ENCODE measurements at regions of chr6 and their contacts with region 1.

Region 1: GRCh38 chr6:11434565-11435326 is 102.8 kb upstream of the TMEM170B start:
- DNase-seq: peak in 1 of 2 donors; percentile 91
- H3K4me3 ChIP-seq: no peak overlapping the region
- H3K27ac ChIP-seq: peak overlapping the region; percentile 83 to 92
- H3K4me1 ChIP-seq: peaks cover 12 to 58% of the 10 kb centered on the region in 2 donors
- H3K27me3 ChIP-seq: no peaks in the 10 kb centered on the region
- CTCF ChIP-seq: no peak

Region 2: DNA sequence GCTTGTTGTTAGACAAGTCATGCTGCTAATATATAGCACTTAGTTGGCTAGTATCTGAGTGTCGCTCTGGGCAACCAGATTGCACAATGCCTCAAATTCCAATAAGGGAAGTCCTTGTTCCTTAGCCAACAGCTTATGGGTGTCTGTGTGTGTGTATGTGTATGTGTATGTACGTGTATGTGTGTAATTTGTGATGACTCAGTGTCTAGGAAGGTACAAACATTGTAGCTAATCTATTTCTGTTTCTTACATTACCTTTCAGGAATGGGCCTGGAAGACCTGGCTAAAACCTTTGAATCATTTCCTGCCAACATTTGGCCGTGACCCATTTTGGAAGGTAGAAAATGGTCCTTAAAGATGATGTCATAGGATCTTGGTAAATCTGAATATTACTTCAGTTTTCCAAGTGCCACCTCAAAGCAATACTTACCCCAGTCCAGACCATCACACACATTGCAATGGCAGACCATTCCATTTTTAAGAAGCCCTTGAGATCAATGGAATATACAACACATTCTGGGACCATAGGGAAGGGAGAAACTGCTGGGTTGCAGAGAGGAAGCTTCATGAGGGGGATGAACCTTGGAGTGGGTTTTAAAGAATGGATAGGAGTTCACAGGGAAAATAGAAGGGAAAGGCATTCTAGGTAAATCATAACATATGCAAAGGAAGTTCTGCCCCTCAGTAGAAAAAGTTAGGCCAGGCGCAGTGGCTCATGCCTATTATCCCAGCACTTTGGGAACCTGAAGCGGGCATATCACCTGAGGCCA is 227.4 kb before region 1 on chr6:
- intact Hi-C with region 1: loop called (anchors 2 kb)
- DNase-seq: peak; percentile 67 to 94
- H3K4me3 ChIP-seq: peak overlapping the region; percentile 11 to 25
- H3K27ac ChIP-seq: peak overlapping the region; percentile 91 to 94
- H3K4me1 ChIP-seq: peaks cover 43 to 89% of the 10 kb centered on the region in 2 donors
- H3K27me3 ChIP-seq: no peaks in the 10 kb centered on the region
- CTCF ChIP-seq: no peak

Region 3: GRCh38 chr6:11473008-11473740 is 38.4 kb after region 1 on chr6:
- intact Hi-C with region 1: loop called (anchors 2 kb)
- DNase-seq: peak in 1 of 2 donors; percentile 70
- H3K4me3 ChIP-seq: peak overlapping the region; percentile 23 to 26
- H3K27ac ChIP-seq: no peak overlapping the region
- H3K4me1 ChIP-seq: peaks cover 0 to 19% of the 10 kb centered on the region in 2 donors
- H3K27me3 ChIP-seq: no peaks in the 10 kb centered on the region
- CTCF ChIP-seq: no peak

Region 4: GRCh38 chr6:11645016-11645415 is 210.3 kb after region 1 on chr6:
- intact Hi-C with region 1: no loop called
- DNase-seq: no peak
- H3K4me3 ChIP-seq: no peak overlapping the region
- H3K27ac ChIP-seq: no peak overlapping the region
- H3K4me1 ChIP-seq: peaks cover 5 to 24% of the 10 kb centered on the region in 2 donors
- H3K27me3 ChIP-seq: no peaks in the 10 kb centered on the region
- CTCF ChIP-seq: no peak